GM12878 (cell line): ENCODE measurements at regions of chr6 and their contacts with region 1.

Region 1: DNA sequence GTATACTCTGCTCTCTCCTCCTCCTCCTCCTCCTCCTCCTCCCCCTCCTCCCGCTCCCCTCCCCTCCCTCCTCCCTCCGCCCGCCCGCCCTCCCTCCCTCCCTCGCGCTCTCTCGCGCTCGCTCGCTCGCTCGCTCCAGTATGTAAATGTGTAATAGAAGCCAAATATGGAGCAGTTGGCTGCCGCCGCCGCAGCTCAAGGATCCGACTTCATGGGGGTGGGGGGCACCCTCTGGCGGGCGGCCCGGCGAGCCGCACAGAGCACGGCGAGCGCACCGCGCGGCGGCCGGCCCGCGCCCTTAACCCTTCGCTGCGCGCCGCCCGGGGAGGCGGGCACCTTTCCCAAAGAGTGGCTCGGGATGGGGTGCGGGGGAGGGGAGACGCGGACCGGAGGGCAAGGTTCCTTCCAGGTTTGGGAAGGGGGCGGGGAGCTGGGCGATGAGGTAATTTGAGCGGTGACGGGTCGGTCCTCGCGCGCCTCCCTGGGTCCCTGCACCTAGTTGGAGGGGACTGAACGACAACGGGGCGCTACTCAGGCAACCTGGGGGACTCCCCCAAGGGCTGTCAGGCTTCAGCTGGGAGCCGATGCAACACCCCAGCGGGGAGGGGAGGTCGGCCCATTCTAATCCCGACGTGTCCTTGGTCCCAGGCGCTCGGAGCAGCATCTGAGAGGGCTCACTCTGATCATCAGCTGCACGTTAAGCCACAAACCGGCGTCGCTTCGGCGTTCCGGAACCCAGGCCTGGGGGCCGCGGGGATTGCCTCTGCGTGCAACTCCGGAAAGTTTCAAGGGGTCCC is 409 bp upstream of the ATXN1 start:
- DNase-seq: no peak
- ATAC-seq: peak; percentile 64
- H3K4me3 ChIP-seq: peak overlapping the region; percentile 80
- H3K27ac ChIP-seq: peak overlapping the region; percentile 68
- H3K4me1 ChIP-seq: peaks cover 8% of the 10 kb centered on the region; the same call in 1 of the 2 replicates
- H3K27me3 ChIP-seq: no peaks in the 10 kb centered on the region
- CTCF ChIP-seq: peak; percentile 24 to 48 (median 41); a peak in 3 of 6 replicates
- EP300 ChIP-seq: no peak; a peak in 1 of 4 replicates
- POLR2A ChIP-seq: peak; percentile 68
- RAD21 ChIP-seq: peak; percentile 64

Region 2: GRCh38 chr6:16286148-16286522 is 475.5 kb before region 1 on chr6:
- CTCF ChIA-PET with region 1: interaction called, 53 read pairs
- POLR2A ChIA-PET with region 1: no interaction called
- RAD21 ChIA-PET with region 1: interaction called, 31 read pairs
- SMC1A ChIA-PET with region 1: interaction called, 35 read pairs
- in situ Hi-C with region 1: no loop called
- intact Hi-C with region 1: no loop called
- DNase-seq: no peak
- ATAC-seq: peak; percentile 82
- H3K4me3 ChIP-seq: no peak overlapping the region
- H3K27ac ChIP-seq: no peak overlapping the region
- H3K4me1 ChIP-seq: no peaks in the 10 kb centered on the region
- H3K27me3 ChIP-seq: no peaks in the 10 kb centered on the region
- CTCF ChIP-seq: peak; percentile 79 to 95 (median 84)
- EP300 ChIP-seq: no peak
- POLR2A ChIP-seq: no peak
- RAD21 ChIP-seq: peak; percentile 90

Region 3: DNA sequence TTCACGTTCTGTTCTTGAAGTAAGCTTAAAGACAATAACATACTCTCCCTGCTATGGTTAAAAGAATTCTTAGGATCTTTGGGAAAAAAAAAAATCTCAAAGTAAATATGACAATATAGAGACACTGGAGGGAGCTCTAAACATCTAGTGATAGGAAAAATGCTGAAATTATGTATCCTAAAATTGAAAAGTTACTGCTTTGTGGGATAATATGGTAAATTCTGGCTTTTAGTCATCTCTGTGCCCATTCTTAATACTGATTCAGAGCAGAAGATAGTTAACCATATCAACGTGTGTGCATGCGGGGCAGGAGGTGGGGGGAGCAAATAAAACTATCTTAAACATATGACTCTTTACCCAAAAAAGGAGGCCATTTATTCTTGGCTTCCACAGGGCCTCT is 357.8 kb before region 1 on chr6:
- CTCF ChIA-PET with region 1: interaction called, 23 read pairs
- POLR2A ChIA-PET with region 1: interaction called, 3 read pairs
- RAD21 ChIA-PET with region 1: interaction called, 10 read pairs
- SMC1A ChIA-PET with region 1: interaction called, 15 read pairs
- in situ Hi-C with region 1: no loop called
- intact Hi-C with region 1: no loop called
- DNase-seq: no peak
- ATAC-seq: no peak
- H3K4me3 ChIP-seq: no peak overlapping the region
- H3K27ac ChIP-seq: no peak overlapping the region
- H3K4me1 ChIP-seq: peaks cover 4% of the 10 kb centered on the region; the same call in 1 of the 2 replicates
- H3K27me3 ChIP-seq: no peaks in the 10 kb centered on the region
- CTCF ChIP-seq: no peak; a peak in 1 of 6 replicates
- EP300 ChIP-seq: no peak
- POLR2A ChIP-seq: no peak
- RAD21 ChIP-seq: peak; percentile 21; the same call in 1 of the 2 replicates

Region 4: GRCh38 chr6:16487996-16488674 is 273.5 kb before region 1 on chr6:
- CTCF ChIA-PET with region 1: interaction called, 12 read pairs
- POLR2A ChIA-PET with region 1: interaction called, 6 read pairs
- RAD21 ChIA-PET with region 1: interaction called, 15 read pairs
- SMC1A ChIA-PET with region 1: interaction called, 12 read pairs
- in situ Hi-C with region 1: no loop called
- intact Hi-C with region 1: loop called (anchors 5 kb)
- DNase-seq: no peak
- ATAC-seq: peak; percentile 7
- H3K4me3 ChIP-seq: peak overlapping the region; percentile 49; the same call in 1 of the 2 replicates
- H3K27ac ChIP-seq: peak overlapping the region; percentile 40; the same call in 1 of the 2 replicates
- H3K4me1 ChIP-seq: peaks cover 69% of the 10 kb centered on the region
- H3K27me3 ChIP-seq: no peaks in the 10 kb centered on the region
- CTCF ChIP-seq: no peak
- EP300 ChIP-seq: peak in 1 of 2 experiments; percentile 41; a peak in 1 of 4 replicates
- POLR2A ChIP-seq: no peak
- RAD21 ChIP-seq: no peak

Region 5: GRCh38 chr6:16591396-16592222 is 170.1 kb before region 1 on chr6:
- CTCF ChIA-PET with region 1: interaction called, 13 read pairs
- POLR2A ChIA-PET with region 1: no interaction called
- RAD21 ChIA-PET with region 1: interaction called, 9 read pairs
- SMC1A ChIA-PET with region 1: interaction called, 9 read pairs
- in situ Hi-C with region 1: no loop called
- intact Hi-C with region 1: loop called (anchors 2 kb)
- DNase-seq: peak; percentile 85
- ATAC-seq: peak; percentile 90
- H3K4me3 ChIP-seq: peak overlapping the region; percentile 43; the same call in 1 of the 2 replicates
- H3K27ac ChIP-seq: peak overlapping the region; percentile 89
- H3K4me1 ChIP-seq: peaks cover 31% of the 10 kb centered on the region
- H3K27me3 ChIP-seq: no peaks in the 10 kb centered on the region
- CTCF ChIP-seq: no peak
- EP300 ChIP-seq: peak; percentile 90 to 96; a peak in 3 of 4 replicates
- POLR2A ChIP-seq: no peak
- RAD21 ChIP-seq: no peak; the same call in 1 of the 2 replicates

Region 6: DNA sequence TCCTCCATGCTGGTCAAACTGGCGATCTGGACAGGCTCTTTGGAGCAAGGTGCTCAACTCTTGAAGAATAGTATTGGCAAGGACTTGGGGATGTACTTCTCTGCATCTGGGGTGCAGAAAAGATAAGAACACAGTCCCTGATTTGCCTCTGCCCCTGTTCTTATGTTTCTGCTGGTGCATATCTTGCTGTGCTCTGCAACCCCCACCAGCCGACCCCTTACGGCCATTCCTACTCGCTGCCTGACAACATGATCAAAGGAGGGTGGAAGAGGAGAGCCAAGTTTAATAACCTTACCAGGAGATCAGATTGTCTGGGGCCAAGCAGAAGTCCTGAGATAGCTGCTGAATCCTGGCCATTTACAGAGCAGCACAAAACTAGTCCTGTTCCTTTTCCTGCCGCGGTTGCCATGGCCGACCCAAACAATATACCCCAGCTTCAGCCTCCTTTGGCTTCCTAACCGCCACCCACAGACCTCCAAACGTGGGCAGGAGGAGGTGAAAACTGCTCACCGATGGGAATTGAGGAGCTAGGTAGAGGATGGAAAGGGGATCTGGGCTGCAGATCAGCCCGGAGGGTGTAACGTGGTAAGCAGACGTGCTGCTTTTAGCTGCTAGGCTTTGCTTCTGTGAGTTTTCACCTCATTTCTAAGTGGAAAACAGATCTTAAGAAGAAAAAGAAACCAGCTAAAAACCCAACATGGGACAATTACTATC is 61.3 kb before region 1 on chr6:
- CTCF ChIA-PET with region 1: interaction called, 8 read pairs
- POLR2A ChIA-PET with region 1: interaction called, 3 read pairs
- RAD21 ChIA-PET with region 1: interaction called, 6 read pairs
- SMC1A ChIA-PET with region 1: interaction called, 19 read pairs
- in situ Hi-C with region 1: no loop called
- intact Hi-C with region 1: no loop called
- DNase-seq: no peak
- ATAC-seq: peak; percentile 58
- H3K4me3 ChIP-seq: no peak overlapping the region
- H3K27ac ChIP-seq: no peak overlapping the region
- H3K4me1 ChIP-seq: peaks cover 12% of the 10 kb centered on the region
- H3K27me3 ChIP-seq: no peaks in the 10 kb centered on the region
- CTCF ChIP-seq: no peak
- EP300 ChIP-seq: no peak
- POLR2A ChIP-seq: no peak
- RAD21 ChIP-seq: no peak

Region 7: GRCh38 chr6:16810411-16810810 is 48.7 kb after region 1 on chr6:
- CTCF ChIA-PET with region 1: no interaction called
- POLR2A ChIA-PET with region 1: no interaction called
- RAD21 ChIA-PET with region 1: no interaction called
- SMC1A ChIA-PET with region 1: no interaction called
- in situ Hi-C with region 1: no loop called
- intact Hi-C with region 1: no loop called
- DNase-seq: no peak
- ATAC-seq: no peak
- H3K4me3 ChIP-seq: no peak overlapping the region
- H3K27ac ChIP-seq: no peak overlapping the region
- H3K4me1 ChIP-seq: no peaks in the 10 kb centered on the region
- H3K27me3 ChIP-seq: no peaks in the 10 kb centered on the region
- CTCF ChIP-seq: no peak
- EP300 ChIP-seq: no peak
- POLR2A ChIP-seq: no peak
- RAD21 ChIP-seq: no peak

Region 8: DNA sequence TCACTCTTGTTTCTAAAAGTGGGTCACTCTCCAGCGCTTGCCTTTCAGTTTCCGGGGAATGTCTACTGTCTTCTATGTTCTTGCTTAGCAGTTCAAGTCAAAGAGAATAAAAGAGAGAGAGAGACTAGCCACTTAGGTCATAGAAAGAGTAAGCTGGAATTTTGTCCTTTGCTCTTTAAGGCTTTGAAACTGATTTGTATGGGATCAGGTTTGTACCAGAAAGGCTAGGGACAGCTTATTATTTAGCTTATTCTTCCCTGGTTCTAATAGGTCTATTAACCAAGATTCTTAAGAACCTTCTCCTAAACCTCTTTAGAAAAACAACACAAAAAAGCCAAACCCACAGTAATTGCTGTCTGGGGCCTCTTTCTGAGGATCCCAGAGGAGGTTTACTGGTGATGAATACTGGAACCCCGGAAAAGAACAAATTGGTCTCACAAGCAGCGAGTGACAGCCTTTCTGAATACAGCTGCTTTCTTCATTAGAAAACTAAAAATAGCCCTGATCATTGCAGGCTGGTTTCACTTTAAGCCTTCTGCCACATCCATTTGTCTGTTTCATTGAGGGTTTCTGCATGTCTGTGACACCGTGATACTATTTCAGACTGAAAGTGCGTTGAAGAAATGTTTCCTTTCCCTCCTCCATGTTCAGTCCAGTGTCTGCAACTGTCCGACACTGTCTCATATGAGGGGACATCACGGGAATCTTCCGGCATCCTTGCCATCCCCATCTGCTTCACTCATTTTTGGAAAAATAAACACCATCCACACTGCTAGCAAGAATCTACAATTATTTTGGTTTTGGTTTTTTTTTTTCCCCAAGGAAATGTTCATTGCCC is 74.7 kb after region 1 on chr6:
- CTCF ChIA-PET with region 1: interaction called, 10 read pairs
- POLR2A ChIA-PET with region 1: no interaction called
- RAD21 ChIA-PET with region 1: interaction called, 6 read pairs
- SMC1A ChIA-PET with region 1: interaction called, 7 read pairs
- in situ Hi-C with region 1: no loop called
- intact Hi-C with region 1: no loop called
- DNase-seq: peak; percentile 77
- ATAC-seq: peak; percentile 80
- H3K4me3 ChIP-seq: peak overlapping the region; percentile 37; the same call in 1 of the 2 replicates
- H3K27ac ChIP-seq: peak overlapping the region; percentile 57
- H3K4me1 ChIP-seq: peaks cover 36% of the 10 kb centered on the region
- H3K27me3 ChIP-seq: no peaks in the 10 kb centered on the region
- CTCF ChIP-seq: no peak
- EP300 ChIP-seq: peak; percentile 31 to 62; a peak in 3 of 4 replicates
- POLR2A ChIP-seq: no peak
- RAD21 ChIP-seq: no peak

Region 9: DNA sequence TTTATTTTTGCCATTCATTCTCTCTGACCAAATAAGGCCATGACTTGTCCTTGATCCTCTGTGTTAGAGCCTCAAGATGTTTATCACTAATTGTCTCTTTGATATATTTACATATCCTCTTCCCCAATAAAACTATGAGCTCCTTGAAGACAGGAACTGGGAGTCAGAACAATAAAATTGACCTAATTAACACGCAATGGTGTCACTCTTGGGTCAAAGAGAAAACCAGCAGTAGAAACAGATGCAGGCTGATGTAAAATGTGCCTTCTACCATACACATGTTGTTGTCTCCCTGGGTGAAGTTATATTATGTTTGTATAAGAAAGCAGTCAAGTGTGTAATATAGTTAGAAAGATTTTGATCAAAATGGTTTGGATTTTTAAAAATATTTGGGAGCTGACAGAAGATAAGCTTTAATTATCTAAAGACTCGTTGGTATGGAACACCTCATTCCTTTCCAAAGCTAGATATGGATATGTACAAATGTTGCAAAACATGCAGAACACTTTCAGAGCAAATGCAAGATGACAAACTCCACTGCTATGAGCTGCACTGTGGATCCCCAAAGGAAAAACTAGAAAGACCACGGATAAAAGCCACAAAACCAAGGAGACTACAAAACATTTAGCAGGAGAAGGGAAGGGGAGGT is 230.4 kb after region 1 on chr6:
- CTCF ChIA-PET with region 1: no interaction called
- POLR2A ChIA-PET with region 1: no interaction called
- RAD21 ChIA-PET with region 1: no interaction called
- SMC1A ChIA-PET with region 1: no interaction called
- in situ Hi-C with region 1: no loop called
- intact Hi-C with region 1: no loop called
- DNase-seq: no peak
- ATAC-seq: no peak
- H3K4me3 ChIP-seq: no peak overlapping the region
- H3K27ac ChIP-seq: no peak overlapping the region
- H3K4me1 ChIP-seq: no peaks in the 10 kb centered on the region
- H3K27me3 ChIP-seq: no peaks in the 10 kb centered on the region; a peak in 1 of 4 replicates
- CTCF ChIP-seq: no peak
- EP300 ChIP-seq: no peak
- POLR2A ChIP-seq: no peak
- RAD21 ChIP-seq: no peak

Region 10: GRCh38 chr6:17015144-17015543 is 253.5 kb after region 1 on chr6:
- CTCF ChIA-PET with region 1: no interaction called
- POLR2A ChIA-PET with region 1: no interaction called
- RAD21 ChIA-PET with region 1: no interaction called
- SMC1A ChIA-PET with region 1: no interaction called
- in situ Hi-C with region 1: no loop called
- intact Hi-C with region 1: no loop called
- DNase-seq: peak; percentile 13
- ATAC-seq: peak; percentile 86
- H3K4me3 ChIP-seq: no peak overlapping the region
- H3K27ac ChIP-seq: no peak overlapping the region
- H3K4me1 ChIP-seq: no peaks in the 10 kb centered on the region
- H3K27me3 ChIP-seq: peaks cover 0 to 2% of the 10 kb centered on the region in 2 experiments; a peak in 1 of 4 replicates
- CTCF ChIP-seq: no peak
- EP300 ChIP-seq: no peak
- POLR2A ChIP-seq: no peak
- RAD21 ChIP-seq: no peak